Mammary epithelial cell (primary cell): ENCODE measurements at regions of chr11 and their contacts with region 1.

Region 1: DNA sequence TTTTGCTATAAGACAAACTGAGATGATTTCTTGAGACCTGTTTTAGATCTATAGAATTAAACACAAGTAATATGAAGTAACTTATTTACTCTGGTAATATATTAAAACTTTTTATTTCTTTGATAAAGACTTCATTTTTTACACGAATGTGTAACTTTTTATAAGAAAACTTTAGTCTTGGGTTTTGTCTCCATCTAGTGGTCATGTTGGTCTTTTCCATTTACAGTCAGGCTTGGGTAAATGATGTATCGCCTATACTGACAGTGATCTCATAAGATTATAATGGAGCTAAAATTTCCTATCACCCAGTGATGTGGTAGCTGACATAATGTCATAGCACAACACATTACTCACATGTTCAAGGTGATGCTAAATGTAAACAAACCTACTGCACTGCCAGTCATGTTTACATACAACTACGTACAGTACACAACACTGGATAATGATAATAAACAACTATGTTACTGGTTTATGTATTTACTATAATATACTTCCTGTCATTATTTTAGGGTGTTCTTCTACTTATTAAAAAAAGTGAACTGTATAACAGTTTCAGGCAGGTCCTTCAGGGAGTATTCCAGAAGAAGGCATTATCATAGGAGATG is 7.5 kb upstream of the C11orf97 start:
- DNase-seq: peak; percentile 38
- H3K4me3 ChIP-seq: no peak overlapping the region
- H3K27ac ChIP-seq: no peak overlapping the region
- H3K4me1 ChIP-seq: no peaks in the 10 kb centered on the region
- H3K27me3 ChIP-seq: no peaks in the 10 kb centered on the region
- CTCF ChIP-seq: peak; percentile 62 to 65

Region 2: GRCh38 chr11:93234602-93235207 is 1270.1 kb before region 1 on chr11:
- CTCF ChIA-PET with region 1: no interaction called
- dilution Hi-C with region 1: no loop called
- in situ Hi-C with region 1: no loop called
- intact Hi-C with region 1: loop called (anchors 5 kb)
- DNase-seq: peak; percentile 54
- H3K4me3 ChIP-seq: no peak overlapping the region
- H3K27ac ChIP-seq: no peak overlapping the region
- H3K4me1 ChIP-seq: no peaks in the 10 kb centered on the region
- H3K27me3 ChIP-seq: no peaks in the 10 kb centered on the region
- CTCF ChIP-seq: peak; percentile 97 to 98

Region 3: DNA sequence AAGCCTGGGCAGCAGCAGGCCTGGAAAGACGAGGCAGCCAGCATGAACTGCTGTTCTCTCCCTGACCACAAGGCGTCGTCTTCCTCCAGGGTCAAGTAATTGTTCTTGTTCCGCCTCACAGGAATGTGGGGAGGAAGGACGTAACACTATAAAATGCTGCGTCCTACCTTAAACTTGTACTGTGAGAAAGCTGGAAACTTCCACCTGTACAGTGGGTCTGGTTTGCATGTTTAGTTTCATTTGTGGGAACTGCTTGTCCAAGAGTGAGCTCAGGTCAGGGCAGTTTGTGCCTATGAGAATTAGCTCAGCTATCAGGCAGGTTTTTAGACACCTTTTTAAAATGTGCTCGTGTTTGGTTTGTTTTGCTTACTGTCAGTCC is 320.9 kb before region 1 on chr11:
- CTCF ChIA-PET with region 1: no interaction called
- dilution Hi-C with region 1: no loop called
- in situ Hi-C with region 1: no loop called
- intact Hi-C with region 1: loop called (anchors 2 kb)
- DNase-seq: peak; percentile 48
- H3K4me3 ChIP-seq: no peak overlapping the region
- H3K27ac ChIP-seq: no peak overlapping the region
- H3K4me1 ChIP-seq: no peaks in the 10 kb centered on the region
- H3K27me3 ChIP-seq: no peaks in the 10 kb centered on the region
- CTCF ChIP-seq: peak; percentile 94 to 96

Region 4: GRCh38 chr11:94325681-94326080 is 179.1 kb before region 1 on chr11:
- CTCF ChIA-PET with region 1: no interaction called
- dilution Hi-C with region 1: no loop called
- in situ Hi-C with region 1: loop called in 1 of 2 experiments (anchors 10 kb)
- intact Hi-C with region 1: loop called (anchors 1 kb)
- DNase-seq: peak; percentile 30
- H3K4me3 ChIP-seq: no peak overlapping the region
- H3K27ac ChIP-seq: no peak overlapping the region
- H3K4me1 ChIP-seq: no peaks in the 10 kb centered on the region
- H3K27me3 ChIP-seq: no peaks in the 10 kb centered on the region
- CTCF ChIP-seq: peak; percentile 65 to 69

Region 5: GRCh38 chr11:94417386-94417987 is 87.3 kb before region 1 on chr11:
- CTCF ChIA-PET with region 1: no interaction called
- dilution Hi-C with region 1: no loop called
- in situ Hi-C with region 1: no loop called
- intact Hi-C with region 1: loop called (anchors 5 kb)
- DNase-seq: peak; percentile 16
- H3K4me3 ChIP-seq: no peak overlapping the region
- H3K27ac ChIP-seq: no peak overlapping the region
- H3K4me1 ChIP-seq: no peaks in the 10 kb centered on the region
- H3K27me3 ChIP-seq: no peaks in the 10 kb centered on the region
- CTCF ChIP-seq: peak; percentile 47 to 71